ENCODE measurements at regions of chr18 and their contacts with region 1.

Region 1: GRCh38 chr18:75358928-75359327 is 68.6 kb downstream of the SMIM21 start:
- DNase-seq: no peak
- ATAC-seq: no peak
- H3K4me3 ChIP-seq: no peak overlapping the region
- H3K27ac ChIP-seq: no peak overlapping the region
- H3K4me1 ChIP-seq: no peaks in the 10 kb centered on the region
- H3K27me3 ChIP-seq: peaks cover 3% of the 10 kb centered on the region; the same call in 1 of the 2 replicates
- CTCF ChIP-seq: no peak
- POLR2A ChIP-seq: no peak
- RAD21 ChIP-seq: no peak

Region 2: DNA sequence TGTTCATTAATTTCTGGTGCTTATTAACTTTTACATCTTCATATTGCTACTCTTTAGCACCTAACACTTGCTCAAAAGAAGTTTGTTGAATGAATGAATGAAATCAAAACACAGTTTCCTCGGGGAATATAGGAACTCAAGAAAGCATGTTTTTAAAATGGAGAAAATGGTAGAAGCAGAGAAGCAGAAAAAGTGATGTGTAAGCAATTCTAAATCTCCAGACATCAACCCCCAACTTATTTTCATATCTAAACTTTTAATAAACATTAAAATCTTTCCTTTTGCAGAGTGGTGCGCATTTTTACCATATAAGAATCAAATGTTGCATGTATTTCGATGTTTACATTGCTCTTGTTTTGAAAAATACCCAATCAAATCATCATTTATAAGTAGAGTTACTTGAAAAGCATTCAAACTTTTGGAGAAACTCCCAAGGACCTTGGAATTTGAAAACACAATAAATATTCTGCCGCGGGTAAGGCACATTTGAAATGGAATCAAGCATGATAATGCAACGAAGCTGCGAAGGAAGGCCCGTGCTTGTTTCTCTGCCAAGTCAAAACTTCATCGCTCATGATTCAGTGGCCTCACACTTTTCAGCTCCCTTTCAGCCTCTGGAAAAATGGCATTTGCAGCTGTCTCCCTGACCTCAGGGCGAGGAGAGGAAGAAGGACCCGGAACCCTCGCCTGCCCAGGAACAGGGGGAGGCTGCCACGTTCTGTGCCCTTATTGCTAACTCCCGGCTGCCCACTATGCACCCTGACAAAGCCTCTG is 95.3 kb after region 1 on chr18:
- CTCF ChIA-PET with region 1: no interaction called
- POLR2A ChIA-PET with region 1: no interaction called
- dilution Hi-C with region 1: no loop called
- in situ Hi-C with region 1: no loop called
- intact Hi-C with region 1: loop called (anchors 5 kb)
- DNase-seq: peak; percentile 23
- ATAC-seq: peak; percentile 49; the same call in 1 of the 2 replicates
- H3K4me3 ChIP-seq: no peak overlapping the region
- H3K27ac ChIP-seq: no peak overlapping the region
- H3K4me1 ChIP-seq: peaks cover 4% of the 10 kb centered on the region; the same call in 1 of the 2 replicates
- H3K27me3 ChIP-seq: no peaks in the 10 kb centered on the region
- CTCF ChIP-seq: no peak
- POLR2A ChIP-seq: no peak
- RAD21 ChIP-seq: no peak

Measured in IMR-90 (cell line).